H1 (cell line): ENCODE measurements at regions of chr9 and their contacts with region 1.

Region 1: GRCh38 chr9:133726401-133727276 is 11.5 kb downstream of the SARDH start:
- DNase-seq: no peak
- H3K4me3 ChIP-seq: no peak overlapping the region
- H3K27ac ChIP-seq: no peak overlapping the region
- H3K4me1 ChIP-seq: no peaks in the 10 kb centered on the region
- H3K27me3 ChIP-seq: no peaks in the 10 kb centered on the region
- CTCF ChIP-seq: peak in 2 of 3 experiments; percentile 76 to 78; a peak in 3 of 4 replicates
- EP300 ChIP-seq: no peak
- POLR2A ChIP-seq: no peak
- RAD21 ChIP-seq: peak; percentile 85 to 87

Region 2: DNA sequence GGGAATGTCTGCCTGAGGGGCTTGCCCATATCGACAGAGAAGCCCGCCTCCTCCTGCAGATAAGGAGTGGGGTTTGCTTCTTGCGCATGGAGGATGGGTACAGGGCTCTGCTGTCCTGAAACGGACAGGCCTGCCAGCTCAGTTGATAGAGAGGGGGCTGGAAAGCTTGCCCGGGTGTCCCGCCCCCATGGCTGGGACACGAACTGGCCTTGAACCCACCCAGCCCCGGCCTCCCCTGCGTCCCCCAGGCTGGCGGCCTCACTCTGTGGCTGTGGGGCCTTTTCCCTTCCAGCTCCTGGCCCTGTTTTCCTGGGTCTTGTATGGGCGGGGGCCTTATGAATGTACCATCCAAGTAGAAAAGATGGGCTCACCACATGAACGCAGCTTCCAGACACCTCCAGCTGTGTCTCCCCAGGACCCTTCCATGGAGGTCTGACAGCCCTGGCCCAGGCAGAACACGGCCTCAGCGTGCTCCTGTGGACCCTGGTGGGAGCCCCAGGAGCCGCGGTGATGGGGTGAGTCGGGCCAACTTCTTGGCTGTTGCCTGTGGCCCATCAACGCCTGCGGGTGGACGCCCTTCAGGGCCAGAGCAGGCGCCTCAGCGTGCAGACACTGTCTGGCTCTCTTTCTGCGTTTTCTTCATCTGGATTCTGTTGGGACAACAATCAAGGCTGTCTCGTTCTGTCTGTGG is 231.9 kb before region 1 on chr9:
- CTCF ChIA-PET with region 1: interaction called, 10 read pairs
- POLR2A ChIA-PET with region 1: no interaction called
- DNase-seq: no peak
- H3K4me3 ChIP-seq: no peak overlapping the region
- H3K27ac ChIP-seq: no peak overlapping the region
- H3K4me1 ChIP-seq: no peaks in the 10 kb centered on the region; a peak in 1 of 7 replicates
- H3K27me3 ChIP-seq: peaks cover 0 to 2% (median 0%) of the 10 kb centered on the region in 4 experiments; a peak in 1 of 7 replicates
- CTCF ChIP-seq: no peak
- EP300 ChIP-seq: no peak
- POLR2A ChIP-seq: no peak
- RAD21 ChIP-seq: no peak

Region 3: GRCh38 chr9:133538851-133539833 is 187.5 kb before region 1 on chr9:
- CTCF ChIA-PET with region 1: interaction called, 18 read pairs
- POLR2A ChIA-PET with region 1: no interaction called
- DNase-seq: no peak
- H3K4me3 ChIP-seq: no peak overlapping the region
- H3K27ac ChIP-seq: no peak overlapping the region
- H3K4me1 ChIP-seq: peaks cover 0 to 35% (median 16%) of the 10 kb centered on the region in 4 experiments; a peak in 6 of 7 replicates
- H3K27me3 ChIP-seq: peaks cover 0 to 16% (median 11%) of the 10 kb centered on the region in 4 experiments; a peak in 3 of 7 replicates
- CTCF ChIP-seq: no peak
- EP300 ChIP-seq: no peak
- POLR2A ChIP-seq: no peak
- RAD21 ChIP-seq: no peak

Region 4: DNA sequence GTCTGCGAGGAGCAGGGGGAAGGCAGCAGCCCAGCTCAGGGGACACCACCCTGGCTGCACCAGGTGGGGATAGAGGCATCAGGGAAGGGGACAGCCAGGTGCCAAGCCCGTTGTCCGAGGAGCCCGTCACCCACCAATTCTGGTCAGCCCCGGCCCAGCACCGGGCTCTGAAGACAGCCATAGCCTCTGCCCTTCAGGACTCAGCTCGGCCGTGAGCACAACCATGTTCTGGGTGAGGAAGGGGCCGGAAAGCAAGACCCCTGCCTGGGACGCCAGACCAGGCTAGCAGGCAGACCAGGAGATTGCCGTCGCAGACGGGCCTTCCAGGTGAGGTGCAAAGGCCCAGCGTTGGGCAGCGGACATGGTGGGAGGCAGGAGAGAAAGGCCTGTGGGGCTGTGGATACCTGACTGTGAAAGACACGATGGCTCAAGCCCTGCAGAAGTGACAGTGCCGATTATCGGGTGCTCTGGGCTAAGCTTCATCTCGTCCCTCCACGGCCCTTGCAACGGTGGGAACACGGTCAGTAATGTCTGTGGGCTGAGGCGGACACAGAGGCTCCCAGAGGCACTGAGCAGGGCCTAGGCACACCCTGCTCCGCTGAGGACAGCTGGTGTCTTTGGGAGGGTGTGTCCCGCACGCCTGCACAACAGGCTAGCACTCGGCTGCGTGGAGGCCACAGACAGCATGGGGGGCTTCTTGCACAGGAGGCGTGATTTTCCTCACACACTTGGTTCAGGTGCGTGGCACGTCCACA is 54.0 kb before region 1 on chr9:
- CTCF ChIA-PET with region 1: interaction called, 10 read pairs
- POLR2A ChIA-PET with region 1: no interaction called
- DNase-seq: no peak
- H3K4me3 ChIP-seq: no peak overlapping the region
- H3K27ac ChIP-seq: no peak overlapping the region
- H3K4me1 ChIP-seq: peaks cover 0 to 9% (median 3%) of the 10 kb centered on the region in 4 experiments; a peak in 5 of 7 replicates
- H3K27me3 ChIP-seq: no peaks in the 10 kb centered on the region
- CTCF ChIP-seq: no peak
- EP300 ChIP-seq: no peak
- POLR2A ChIP-seq: no peak
- RAD21 ChIP-seq: no peak

Region 5: DNA sequence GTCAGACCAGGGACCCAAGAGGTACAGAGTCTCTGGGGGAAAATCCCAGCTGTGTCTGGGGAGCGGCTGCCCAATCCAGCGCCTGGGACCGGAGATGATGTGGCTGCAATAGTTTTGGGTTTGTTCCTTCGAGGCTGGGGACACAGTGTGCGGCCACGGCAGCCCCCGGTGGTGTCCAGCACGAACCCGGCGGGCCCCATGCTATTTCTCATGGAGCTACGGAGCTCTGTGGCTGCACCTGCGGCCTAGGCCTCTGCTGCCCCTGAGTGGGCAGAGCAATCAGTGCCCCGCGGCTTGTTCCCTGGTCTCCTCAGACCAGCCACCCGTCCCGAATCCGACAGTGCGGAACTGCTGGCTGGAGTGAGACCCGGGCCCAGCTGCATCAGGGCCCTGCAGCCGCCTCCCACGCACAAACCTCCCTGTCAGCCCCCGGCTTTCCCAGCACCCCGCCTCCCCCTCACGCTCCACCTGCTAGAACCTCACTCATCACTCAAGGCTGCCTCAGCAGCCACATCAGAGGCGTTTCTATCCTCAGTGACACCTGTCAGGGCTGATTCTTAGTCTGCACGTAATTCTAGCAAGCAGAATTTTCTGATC is 17.5 kb before region 1 on chr9:
- CTCF ChIA-PET with region 1: interaction called, 39 read pairs
- POLR2A ChIA-PET with region 1: no interaction called
- DNase-seq: no peak
- H3K4me3 ChIP-seq: no peak overlapping the region
- H3K27ac ChIP-seq: no peak overlapping the region
- H3K4me1 ChIP-seq: peaks cover 0 to 3% (median 0%) of the 10 kb centered on the region in 4 experiments; a peak in 1 of 7 replicates
- H3K27me3 ChIP-seq: no peaks in the 10 kb centered on the region
- CTCF ChIP-seq: peak in 2 of 3 experiments; percentile 19 to 28; a peak in 2 of 4 replicates
- EP300 ChIP-seq: no peak
- POLR2A ChIP-seq: no peak
- RAD21 ChIP-seq: peak; percentile 43 to 61

Region 6: DNA sequence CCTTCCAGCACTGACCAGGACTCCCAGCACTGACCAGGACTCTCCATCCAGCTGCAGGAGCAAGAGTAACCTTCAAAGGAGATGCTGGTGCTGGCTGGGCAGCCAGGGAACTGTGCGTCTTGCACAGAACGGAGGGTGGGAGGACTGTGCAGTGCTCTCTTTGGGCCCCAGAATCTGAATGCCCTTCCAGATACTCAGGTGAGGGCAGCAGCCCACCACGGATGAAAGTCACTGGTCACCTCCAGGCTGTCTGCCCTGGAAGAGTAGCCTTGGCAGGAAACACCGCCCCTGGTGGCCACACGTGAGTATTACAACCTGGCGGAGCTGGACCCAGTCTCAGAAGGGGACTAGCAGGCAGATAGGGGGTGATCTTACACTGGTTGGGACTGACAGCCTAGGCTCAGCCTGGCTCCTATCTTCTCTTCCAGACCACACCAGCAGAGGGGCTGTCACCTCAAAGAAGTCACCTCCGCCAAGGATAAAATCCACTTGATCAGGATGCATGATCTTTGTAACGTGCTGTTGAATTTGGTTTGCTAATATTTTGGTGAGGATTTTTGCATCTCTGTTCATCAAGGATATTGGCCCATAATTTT is 16.3 kb after region 1 on chr9:
- CTCF ChIA-PET with region 1: interaction called, 25 read pairs
- POLR2A ChIA-PET with region 1: no interaction called
- DNase-seq: peak; percentile 84 to 99
- H3K4me3 ChIP-seq: no peak overlapping the region
- H3K27ac ChIP-seq: no peak overlapping the region
- H3K4me1 ChIP-seq: peaks cover 0 to 10% (median 5%) of the 10 kb centered on the region in 4 experiments; a peak in 6 of 7 replicates
- H3K27me3 ChIP-seq: no peaks in the 10 kb centered on the region
- CTCF ChIP-seq: peak in 2 of 3 experiments; percentile 99 to 100; a peak in 3 of 4 replicates
- EP300 ChIP-seq: no peak
- POLR2A ChIP-seq: no peak
- RAD21 ChIP-seq: peak; percentile 79 to 88